ENCODE measurements at regions of chr10 and their contacts with region 1.

Region 1: DNA sequence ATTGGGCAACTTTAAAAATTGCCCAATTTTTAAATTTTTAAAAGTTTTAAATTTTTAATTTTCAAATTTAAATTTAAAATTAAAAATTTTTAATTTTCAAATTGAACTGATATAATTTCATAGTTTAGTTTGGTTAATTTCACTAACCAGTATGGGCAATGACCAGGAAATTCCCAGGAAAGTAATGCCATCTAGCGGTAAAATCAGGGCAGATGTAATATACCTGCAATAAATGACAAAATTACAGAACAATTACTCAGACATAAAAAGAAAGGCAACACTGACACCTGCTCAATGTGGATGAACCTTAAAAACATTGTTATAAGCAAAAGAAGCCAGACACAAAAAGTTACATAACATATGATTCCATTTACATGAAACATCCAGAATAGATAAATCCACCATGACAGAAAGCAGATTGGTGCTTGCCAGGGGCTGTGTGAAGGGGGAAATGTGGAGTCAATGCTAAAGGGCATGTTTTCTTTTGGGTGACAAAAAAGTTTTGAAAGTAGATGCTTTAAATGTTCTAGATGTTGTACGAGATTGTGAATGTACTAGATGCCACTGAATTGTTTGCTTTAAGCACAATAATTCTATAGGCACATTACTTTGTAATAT is 28.6 kb upstream of the SLC16A12 start:
- DNase-seq: peak in 16 of 42 donors; percentile 15 to 71 (median 36)

Region 2: GRCh38 chr10:89426230-89426868 is 137.6 kb before region 1 on chr10:
- intact Hi-C with region 1: loop called (anchors 2 kb)
- DNase-seq: peak in 12 of 42 donors; percentile 16 to 69 (median 36)

Region 3: GRCh38 chr10:89853781-89854191 is 289.8 kb after region 1 on chr10:
- intact Hi-C with region 1: no loop called
- DNase-seq: no peak

Measured in head of caudate nucleus (tissue), 42 donors.